Activated CD4-positive, alpha-beta memory T cell treated with anti-CD3 and anti-CD28 coated beads for 36 hours (primary cell): ENCODE measurements at regions of chr5 and their contacts with region 1.

Region 1: DNA sequence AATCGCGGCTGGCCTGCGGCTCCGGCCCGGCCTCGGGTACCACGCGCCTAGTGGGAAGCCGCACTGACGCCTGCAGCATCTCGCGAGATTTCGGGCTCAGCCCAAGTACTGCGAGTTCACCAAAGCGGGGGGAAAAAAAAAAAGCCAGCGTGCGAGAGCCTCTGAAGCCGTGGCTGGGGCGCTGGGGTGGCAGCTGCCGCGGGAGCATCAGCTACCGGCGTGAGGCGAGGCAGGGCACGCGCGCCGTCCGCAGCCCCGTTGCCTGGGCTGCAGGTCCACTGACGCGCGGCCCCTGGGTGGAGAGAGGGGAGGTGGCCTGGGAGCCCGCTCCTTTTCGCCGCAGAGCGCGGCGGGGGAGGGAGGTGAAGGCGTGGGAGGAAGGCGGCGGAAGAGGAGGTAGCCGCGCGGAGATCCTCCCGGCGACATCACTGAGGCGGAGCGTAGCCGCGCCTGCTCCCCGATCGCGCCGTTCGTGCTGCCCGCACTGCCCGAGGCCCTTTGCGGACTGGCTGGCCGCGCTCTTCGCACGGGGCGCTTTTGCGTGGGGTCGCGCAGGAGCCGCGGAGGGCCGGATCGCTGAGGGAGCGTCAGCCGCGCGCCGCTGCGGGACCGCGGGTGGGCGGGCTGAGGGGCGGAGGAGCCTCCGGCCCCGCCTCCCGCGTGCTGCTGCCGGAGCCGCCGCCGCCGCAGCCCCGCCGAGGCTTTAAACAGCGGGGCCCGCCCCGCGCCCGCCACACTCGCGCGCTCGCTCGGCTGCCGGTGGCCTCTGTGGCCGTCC is at the start of gene SLC12A2:
- DNase-seq: peak; percentile 92
- H3K4me3 Mint-ChIP-seq: peak within 1 kb of the TSS; percentile 89
- H3K27ac Mint-ChIP-seq: peak within 1 kb of the TSS; percentile 93
- H3K4me1 Mint-ChIP-seq: peaks cover 54% of the 10 kb centered on the region
- H3K27me3 Mint-ChIP-seq: no peaks in the 10 kb centered on the region
- total RNA-seq, gene SLC12A2: 9.7 to 9.9 TPM

Region 2: GRCh38 chr5:127517480-127518318 is 565.5 kb before region 1 on chr5 and contains the start of gene PRRC1:
- CTCF ChIA-PET with region 1: no interaction called
- POLR2A ChIA-PET with region 1: no interaction called
- intact Hi-C with region 1: loop called (anchors 1 kb)
- DNase-seq: peak; percentile 87
- H3K4me3 Mint-ChIP-seq: peak within 1 kb of the TSS; percentile 84
- H3K27ac Mint-ChIP-seq: peak within 1 kb of the TSS; percentile 50
- H3K4me1 Mint-ChIP-seq: peaks cover 33% of the 10 kb centered on the region
- H3K27me3 Mint-ChIP-seq: peaks cover 3% of the 10 kb centered on the region
- total RNA-seq, gene PRRC1: 39.4 to 44.0 TPM

Region 3: GRCh38 chr5:127757576-127757975 is 325.6 kb before region 1 on chr5:
- CTCF ChIA-PET with region 1: no interaction called
- POLR2A ChIA-PET with region 1: no interaction called
- intact Hi-C with region 1: loop called (anchors 5 kb)
- DNase-seq: peak; percentile 37
- H3K4me3 Mint-ChIP-seq: no peak overlapping the region
- H3K27ac Mint-ChIP-seq: no peak overlapping the region
- H3K4me1 Mint-ChIP-seq: no peaks in the 10 kb centered on the region
- H3K27me3 Mint-ChIP-seq: no peaks in the 10 kb centered on the region

Region 4: DNA sequence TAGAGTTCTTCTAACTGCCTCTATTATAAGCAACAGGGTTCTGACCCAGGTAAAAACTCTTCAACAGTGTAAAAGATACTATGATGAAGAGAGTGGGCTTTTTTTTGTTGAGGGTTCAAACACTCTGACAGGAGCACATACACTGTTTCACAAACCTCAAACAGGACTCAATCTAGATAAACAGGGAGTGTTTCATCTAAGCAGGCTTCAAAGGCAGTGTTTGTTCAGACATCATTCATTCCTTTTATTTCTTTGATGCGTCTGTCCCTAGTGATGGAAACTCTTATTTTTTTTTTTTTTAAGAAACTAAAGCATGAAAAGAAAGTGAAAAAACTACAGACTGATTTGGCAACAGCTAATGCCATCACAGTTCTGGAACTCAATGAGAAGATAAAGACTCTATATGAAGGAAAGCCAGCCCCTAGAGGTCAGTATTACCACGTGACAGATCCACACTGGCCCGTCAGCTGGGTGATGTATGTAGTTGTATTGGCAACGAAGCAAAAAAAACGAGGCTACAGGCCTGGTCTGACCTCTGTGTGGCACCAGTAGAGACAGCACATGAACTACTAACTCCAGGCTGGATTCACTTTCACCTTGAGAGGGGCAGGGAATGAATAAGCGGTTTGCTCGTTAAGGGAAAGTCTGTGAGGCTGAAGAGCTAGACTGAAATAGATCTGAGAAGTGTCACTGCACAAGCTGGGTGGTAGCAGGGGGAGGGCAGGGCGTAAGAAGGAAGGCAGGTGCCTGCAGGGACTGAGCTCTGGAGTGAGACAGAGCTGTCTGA is 207.8 kb before region 1 on chr5:
- CTCF ChIA-PET with region 1: no interaction called
- POLR2A ChIA-PET with region 1: no interaction called
- intact Hi-C with region 1: loop called (anchors 5 kb)
- DNase-seq: peak; percentile 44
- H3K4me3 Mint-ChIP-seq: no peak overlapping the region
- H3K27ac Mint-ChIP-seq: no peak overlapping the region
- H3K4me1 Mint-ChIP-seq: no peaks in the 10 kb centered on the region
- H3K27me3 Mint-ChIP-seq: peaks cover 8% of the 10 kb centered on the region

Region 5: DNA sequence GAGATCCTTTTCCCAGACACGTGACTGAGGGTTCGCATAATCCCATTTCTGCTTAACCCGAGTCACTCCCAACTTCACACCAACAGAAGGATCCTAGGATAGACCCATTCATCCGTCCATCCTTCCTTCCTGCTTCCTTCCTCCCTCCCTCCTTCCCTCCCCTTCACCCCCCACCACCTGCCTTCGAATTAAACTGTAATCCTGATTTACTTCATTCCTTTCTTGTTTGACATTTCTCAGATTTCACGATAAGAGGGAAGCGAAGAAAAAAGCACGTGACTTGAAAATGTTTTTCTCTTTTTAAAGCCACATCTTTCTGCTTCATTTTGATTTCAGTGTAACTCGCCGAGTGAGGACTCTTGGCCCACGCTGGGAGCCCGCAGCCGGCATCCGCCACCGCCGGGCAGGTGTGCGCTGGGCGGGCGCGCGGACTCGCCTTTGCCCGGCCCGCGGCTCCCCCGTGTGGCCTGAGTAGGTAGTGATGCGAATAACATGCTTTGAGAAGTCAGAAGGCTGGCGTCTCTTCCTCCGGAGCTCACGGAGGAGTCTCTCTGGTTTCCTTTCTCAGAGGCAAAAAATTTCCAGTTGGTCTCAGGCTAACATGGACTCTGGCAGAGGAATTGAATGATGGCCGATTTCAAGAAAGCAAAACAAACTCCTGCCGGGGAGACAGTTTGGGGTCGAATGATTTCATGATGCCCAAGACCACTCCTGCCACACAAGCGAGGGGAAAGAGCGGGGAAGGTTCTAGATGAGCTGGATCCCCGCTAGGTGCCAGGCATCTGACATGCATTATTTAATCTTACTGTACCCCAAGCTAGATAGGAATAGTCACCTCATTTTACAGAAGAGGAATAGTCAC is 118.1 kb after region 1 on chr5:
- CTCF ChIA-PET with region 1: interaction called, 5 read pairs
- POLR2A ChIA-PET with region 1: no interaction called
- intact Hi-C with region 1: loop called (anchors 2 kb)
- DNase-seq: peak; percentile 89
- H3K4me3 Mint-ChIP-seq: no peak overlapping the region
- H3K27ac Mint-ChIP-seq: no peak overlapping the region
- H3K4me1 Mint-ChIP-seq: peaks cover 29% of the 10 kb centered on the region
- H3K27me3 Mint-ChIP-seq: peaks cover 7% of the 10 kb centered on the region

Region 6: DNA sequence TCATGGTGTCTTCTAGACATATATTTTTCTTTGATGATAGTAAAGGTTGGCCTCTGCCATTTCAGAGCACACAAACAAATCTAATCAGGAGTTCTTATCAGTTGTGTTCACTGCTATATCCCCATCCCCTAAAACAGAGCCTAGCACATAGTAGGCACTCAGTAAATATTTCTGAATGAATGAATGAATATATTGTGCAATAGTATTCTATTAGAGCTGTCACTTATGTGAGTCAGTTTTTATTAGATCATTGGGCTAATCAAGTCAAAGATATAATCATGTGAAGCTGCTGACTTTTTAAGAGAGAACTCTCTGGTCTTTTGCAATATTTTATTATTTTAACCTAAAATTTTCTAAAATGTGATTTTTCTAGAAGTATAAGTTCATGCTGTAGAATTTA is 1905.2 kb after region 1 on chr5:
- CTCF ChIA-PET with region 1: no interaction called
- POLR2A ChIA-PET with region 1: no interaction called
- intact Hi-C with region 1: no loop called
- DNase-seq: no peak
- H3K4me3 Mint-ChIP-seq: no peak overlapping the region
- H3K27ac Mint-ChIP-seq: no peak overlapping the region
- H3K4me1 Mint-ChIP-seq: no peaks in the 10 kb centered on the region
- H3K27me3 Mint-ChIP-seq: no peaks in the 10 kb centered on the region